ENCODE measurements at regions of chr19 and their contacts with region 1.

Region 1: DNA sequence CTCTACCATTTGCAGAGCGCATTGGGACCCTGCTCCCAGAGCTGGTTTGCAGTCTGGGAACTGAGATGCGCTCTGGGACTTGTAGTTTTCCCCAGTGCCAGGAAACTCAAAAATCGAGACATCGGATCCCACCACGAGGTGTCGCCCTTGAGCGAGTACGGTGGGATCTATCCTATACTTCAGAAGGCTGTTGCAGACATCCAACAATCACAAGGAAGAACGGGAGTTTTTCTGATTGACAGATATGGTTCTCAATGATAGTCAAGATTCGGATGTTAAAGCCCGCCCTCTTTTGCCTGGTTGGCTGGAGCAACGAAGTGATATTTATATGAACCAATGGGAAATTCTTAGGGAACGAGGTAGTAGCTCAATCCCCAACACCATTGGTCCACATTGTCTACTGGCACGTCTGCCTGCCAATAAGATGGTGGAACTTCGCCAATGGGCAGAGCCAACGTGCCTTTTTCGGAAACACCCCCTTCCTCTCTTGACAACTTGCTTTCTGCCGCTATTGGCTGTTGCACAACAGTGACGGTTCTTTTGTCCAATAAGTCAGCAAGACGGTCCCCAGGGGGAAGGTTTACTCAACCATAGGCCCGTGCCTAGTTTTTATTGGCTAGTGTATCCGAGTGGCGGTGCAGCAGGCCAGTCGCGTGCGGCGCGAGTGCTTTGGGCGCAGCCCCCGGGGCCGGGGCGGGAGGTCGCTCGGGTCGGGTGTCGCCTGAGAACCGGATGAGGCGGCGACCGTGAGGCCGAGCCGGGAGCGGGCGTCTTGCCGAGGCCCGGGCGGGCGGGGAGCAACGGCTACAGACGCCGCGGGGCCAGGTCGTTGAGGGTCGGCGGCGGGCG is at the start of gene DNM2:
- DNase-seq: peak; percentile 99 to 100
- H3K4me3 ChIP-seq: peak within 1 kb of the TSS; percentile 95 to 99
- H3K27ac ChIP-seq: peak within 1 kb of the TSS; percentile 89 to 94
- H3K4me1 ChIP-seq: peaks cover 0 to 23% of the 10 kb centered on the region in 2 donors
- H3K27me3 ChIP-seq: no peaks in the 10 kb centered on the region
- CTCF ChIP-seq: peak; percentile 80 to 90 (median 82)
- total RNA-seq, gene DNM2: 113 TPM

Region 2: GRCh38 chr19:9914315-9915207 is 803.0 kb before region 1 on chr19:
- intact Hi-C with region 1: no loop called
- DNase-seq: peak; percentile 26 to 83
- H3K4me3 ChIP-seq: peak overlapping the region; percentile 64 to 74
- H3K27ac ChIP-seq: no peak overlapping the region
- H3K4me1 ChIP-seq: peaks cover 0 to 10% of the 10 kb centered on the region in 2 donors
- H3K27me3 ChIP-seq: no peaks in the 10 kb centered on the region
- CTCF ChIP-seq: peak; percentile 41 to 49 (median 48)

Region 3: DNA sequence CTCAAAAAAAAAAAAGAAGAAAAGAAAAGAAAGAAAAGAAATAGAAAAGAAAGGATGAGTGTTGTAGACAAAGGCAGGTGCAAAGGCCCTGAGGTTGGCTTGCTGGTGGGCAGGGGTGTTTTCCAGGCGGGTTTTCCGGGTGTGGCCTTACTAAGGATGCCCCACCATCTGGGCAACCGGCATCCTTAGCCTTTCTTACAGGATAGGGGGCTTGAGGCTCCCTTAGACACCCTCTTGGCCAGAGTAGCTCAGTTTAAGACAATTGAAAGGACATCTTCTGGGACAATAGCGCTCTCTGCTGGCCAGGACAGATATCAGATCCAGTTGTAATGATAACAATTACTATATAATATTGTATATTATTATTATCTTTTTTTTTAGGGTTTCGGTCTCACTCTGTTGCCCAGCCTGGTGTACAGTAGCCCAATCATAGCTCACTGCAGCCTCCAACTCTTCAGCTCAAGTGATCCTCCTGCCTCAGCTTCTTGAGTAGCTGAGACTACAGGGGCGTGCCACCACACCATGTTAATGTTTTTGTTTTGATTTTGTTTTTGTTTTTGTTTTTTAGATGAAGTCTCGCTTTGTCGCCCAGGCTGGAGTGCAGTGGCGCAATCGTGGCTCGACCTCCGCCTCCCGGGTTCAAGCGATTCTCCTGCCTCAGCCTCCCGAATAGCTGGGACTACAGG is 17.8 kb before region 1 on chr19:
- intact Hi-C with region 1: loop called (anchors 1 kb)
- DNase-seq: no peak
- H3K4me3 ChIP-seq: no peak overlapping the region
- H3K27ac ChIP-seq: no peak overlapping the region
- H3K4me1 ChIP-seq: peaks cover 0 to 5% of the 10 kb centered on the region in 2 donors
- H3K27me3 ChIP-seq: no peaks in the 10 kb centered on the region
- CTCF ChIP-seq: peak; percentile 14 to 55 (median 27)

Region 4: DNA sequence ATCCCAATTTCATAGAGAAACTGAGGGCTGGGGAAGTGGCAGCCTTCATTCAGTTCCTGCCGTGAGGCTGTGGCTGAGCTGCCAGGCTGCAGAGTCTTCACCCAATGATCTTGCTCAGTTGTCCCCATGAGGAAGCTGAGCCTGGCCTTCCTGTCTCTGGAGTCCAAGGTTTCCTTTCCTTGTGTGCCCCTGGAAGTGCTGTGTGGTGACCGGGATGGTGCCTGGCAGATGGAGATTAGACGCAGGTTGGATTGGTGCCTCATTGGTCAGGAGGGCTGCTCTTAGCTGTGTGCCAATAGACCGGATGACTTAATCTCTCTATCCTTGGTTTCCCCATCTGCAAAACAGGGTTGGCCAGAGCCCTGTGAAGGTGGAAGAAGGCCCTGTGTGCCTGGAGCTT is 24.9 kb after region 1 on chr19:
- intact Hi-C with region 1: no loop called
- DNase-seq: no peak
- H3K4me3 ChIP-seq: no peak overlapping the region
- H3K27ac ChIP-seq: no peak overlapping the region
- H3K4me1 ChIP-seq: peaks cover 0 to 2% of the 10 kb centered on the region in 2 donors
- H3K27me3 ChIP-seq: no peaks in the 10 kb centered on the region
- CTCF ChIP-seq: no peak

Region 5: DNA sequence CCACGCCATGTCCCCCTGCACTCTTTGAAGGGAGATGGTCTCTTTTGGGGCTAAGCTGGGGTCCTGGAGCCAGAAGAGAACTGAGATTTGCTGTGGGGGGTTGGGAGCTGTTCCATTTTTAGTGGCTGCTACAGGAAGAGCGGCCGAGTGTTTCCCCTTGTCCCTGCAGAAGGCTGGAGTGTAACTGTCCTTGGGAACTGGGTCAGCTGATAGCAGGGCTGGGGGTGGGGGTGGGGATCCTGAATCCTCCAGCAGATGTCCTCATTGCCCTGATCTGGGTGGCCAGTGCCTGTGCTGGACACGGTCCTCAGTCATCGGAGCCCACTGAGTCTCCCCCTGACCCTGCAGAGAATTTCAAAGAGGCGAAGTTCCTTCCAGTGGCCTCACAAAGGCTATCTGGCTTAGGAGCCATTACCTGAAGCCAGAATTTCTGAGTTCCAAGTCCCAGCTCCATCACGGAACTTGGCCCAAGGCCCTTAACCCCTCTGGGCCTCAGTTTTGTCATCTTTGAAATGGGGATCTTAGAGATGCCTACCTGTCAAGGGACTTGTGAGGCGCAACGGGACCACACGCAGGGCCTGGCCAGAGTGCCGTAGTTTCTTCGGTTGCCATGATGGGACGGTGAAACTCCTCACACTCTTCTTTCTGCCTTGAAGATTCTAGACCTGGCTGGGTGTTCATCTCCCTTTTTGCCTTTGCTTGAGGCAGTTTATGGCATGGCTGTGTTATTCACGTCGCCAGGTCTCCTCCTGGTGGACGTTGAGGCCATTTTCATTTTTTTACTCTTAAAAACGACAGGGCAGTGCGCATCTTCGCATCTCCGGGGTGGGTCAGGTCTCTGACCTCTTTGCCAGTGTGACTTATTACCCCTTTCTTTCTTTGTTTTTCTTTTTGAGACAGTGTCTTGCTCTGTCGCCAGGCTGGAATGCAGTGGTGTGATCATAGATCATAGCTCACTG is 52.2 kb after region 1 on chr19:
- intact Hi-C with region 1: loop called (anchors 2 kb)
- DNase-seq: peak in 1 of 2 donors; percentile 73
- H3K4me3 ChIP-seq: no peak overlapping the region
- H3K27ac ChIP-seq: peak overlapping the region; percentile 24
- H3K4me1 ChIP-seq: peaks cover 16 to 33% of the 10 kb centered on the region in 2 donors
- H3K27me3 ChIP-seq: no peaks in the 10 kb centered on the region
- CTCF ChIP-seq: peak in 2 of 3 experiments; percentile 15 to 30

Region 6: GRCh38 chr19:10864538-10864899 is 146.9 kb after region 1 on chr19:
- intact Hi-C with region 1: loop called (anchors 1 kb)
- DNase-seq: peak in 1 of 2 donors; percentile 89
- H3K4me3 ChIP-seq: peak overlapping the region; percentile 16 to 33
- H3K27ac ChIP-seq: peak overlapping the region in 1 of 2 donors; percentile 69
- H3K4me1 ChIP-seq: peaks cover 4 to 8% of the 10 kb centered on the region in 2 donors
- H3K27me3 ChIP-seq: no peaks in the 10 kb centered on the region
- CTCF ChIP-seq: peak; percentile 82 to 92 (median 89)

Region 7: DNA sequence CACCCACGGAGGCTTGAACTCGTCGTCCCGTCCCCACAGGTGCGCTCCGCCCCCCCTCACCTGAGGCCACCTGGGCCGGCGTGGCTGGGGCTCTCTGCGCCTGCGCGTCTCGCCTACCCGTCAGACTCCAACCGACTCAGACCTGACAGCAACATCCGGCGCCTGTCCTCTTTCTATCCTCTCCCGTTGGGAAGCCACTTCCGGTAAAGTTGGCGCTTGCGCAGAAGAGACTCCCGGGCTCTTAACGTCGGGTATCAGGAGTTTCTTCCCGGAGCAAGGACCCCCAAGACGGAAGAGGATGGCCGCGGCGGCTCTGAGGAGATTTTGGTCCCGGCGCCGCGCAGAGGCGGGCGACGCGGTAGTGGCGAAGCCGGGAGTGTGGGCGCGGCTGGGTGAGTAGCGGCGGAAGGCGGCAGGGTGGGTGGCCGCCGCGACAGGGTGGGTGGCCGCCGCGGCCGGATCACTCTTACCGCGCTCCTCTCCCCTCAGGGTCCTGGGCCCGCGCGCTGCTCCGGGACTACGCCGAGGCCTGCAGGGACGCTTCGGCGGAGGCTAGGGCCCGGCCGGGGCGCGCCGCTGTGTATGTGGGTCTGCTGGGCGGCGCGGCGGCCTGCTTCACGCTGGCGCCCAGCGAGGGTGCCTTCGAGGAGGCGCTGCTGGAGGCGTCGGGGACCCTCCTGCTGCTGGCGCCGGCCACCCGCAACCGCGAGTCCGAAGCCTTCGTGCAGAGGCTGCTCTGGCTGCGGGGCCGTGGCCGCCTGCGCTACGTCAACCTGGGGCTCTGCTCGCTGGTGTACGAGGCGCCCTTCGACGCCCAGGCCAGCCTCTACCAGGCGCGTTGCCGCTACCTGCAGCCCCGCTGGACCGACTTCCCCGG is 211.2 kb after region 1 on chr19 and contains the starts of genes TIMM29 and YIPF2:
- intact Hi-C with region 1: loop called (anchors 2 kb)
- DNase-seq: peak; percentile 93 to 98
- H3K4me3 ChIP-seq: peak within 1 kb of the TSS; percentile 70 to 95
- H3K27ac ChIP-seq: peak within 1 kb of the TSS; percentile 83 to 90
- H3K4me1 ChIP-seq: peaks cover 11 to 20% of the 10 kb centered on the region in 2 donors
- H3K27me3 ChIP-seq: no peaks in the 10 kb centered on the region
- CTCF ChIP-seq: no peak
- total RNA-seq, gene TIMM29: 66.9 TPM
- total RNA-seq, gene YIPF2: 139 TPM